B cell (primary cell): ENCODE measurements at regions of chr9 and their contacts with region 1.

Region 1: DNA sequence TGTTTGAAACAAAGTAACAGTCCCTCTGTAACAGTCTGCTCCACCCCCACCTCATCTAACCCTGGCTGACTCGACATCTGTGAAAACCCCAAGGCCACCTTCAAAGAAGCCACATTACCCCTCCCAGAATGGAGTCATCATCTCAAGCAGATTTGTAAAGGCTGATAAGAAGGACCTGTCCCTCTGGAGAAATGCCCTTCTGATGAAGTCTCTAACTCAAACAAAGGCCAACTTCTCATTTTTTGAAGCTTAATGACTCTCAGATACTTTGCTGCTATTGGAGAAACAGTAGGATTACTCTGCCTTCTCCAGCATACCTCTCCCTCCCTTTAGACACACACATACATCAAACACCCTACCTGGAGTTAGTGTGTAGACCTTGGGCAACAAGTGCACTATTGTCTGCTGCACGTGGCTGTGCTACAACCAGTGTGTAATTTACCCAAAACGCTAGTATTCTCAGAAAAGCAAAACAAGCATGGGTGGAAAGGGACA is 5.3 kb upstream of the SUSD1 start:
- DNase-seq: peak; percentile 16
- ATAC-seq: no peak
- H3K4me3 ChIP-seq: no peak overlapping the region
- H3K4me3 Mint-ChIP-seq: no peak overlapping the region
- H3K27ac ChIP-seq: no peak overlapping the region
- H3K27ac Mint-ChIP-seq: peak overlapping the region; percentile 32
- H3K4me1 ChIP-seq: peaks cover 14 to 19% of the 10 kb centered on the region in 2 donors
- H3K4me1 Mint-ChIP-seq: peaks cover 25% of the 10 kb centered on the region
- H3K27me3 ChIP-seq: no peaks in the 10 kb centered on the region
- H3K27me3 Mint-ChIP-seq: no peaks in the 10 kb centered on the region
- CTCF ChIP-seq: no peak

Region 2: GRCh38 chr9:110690962-110691549 is 1489.4 kb before region 1 on chr9:
- CTCF ChIA-PET with region 1: no interaction called
- POLR2A ChIA-PET with region 1: no interaction called
- intact Hi-C with region 1: no loop called
- DNase-seq: no peak
- ATAC-seq: no peak
- H3K4me3 ChIP-seq: no peak overlapping the region
- H3K4me3 Mint-ChIP-seq: no peak overlapping the region
- H3K27ac ChIP-seq: no peak overlapping the region
- H3K27ac Mint-ChIP-seq: no peak overlapping the region
- H3K4me1 ChIP-seq: no peaks in the 10 kb centered on the region
- H3K4me1 Mint-ChIP-seq: no peaks in the 10 kb centered on the region
- H3K27me3 ChIP-seq: no peaks in the 10 kb centered on the region
- H3K27me3 Mint-ChIP-seq: no peaks in the 10 kb centered on the region
- CTCF ChIP-seq: no peak

Region 3: DNA sequence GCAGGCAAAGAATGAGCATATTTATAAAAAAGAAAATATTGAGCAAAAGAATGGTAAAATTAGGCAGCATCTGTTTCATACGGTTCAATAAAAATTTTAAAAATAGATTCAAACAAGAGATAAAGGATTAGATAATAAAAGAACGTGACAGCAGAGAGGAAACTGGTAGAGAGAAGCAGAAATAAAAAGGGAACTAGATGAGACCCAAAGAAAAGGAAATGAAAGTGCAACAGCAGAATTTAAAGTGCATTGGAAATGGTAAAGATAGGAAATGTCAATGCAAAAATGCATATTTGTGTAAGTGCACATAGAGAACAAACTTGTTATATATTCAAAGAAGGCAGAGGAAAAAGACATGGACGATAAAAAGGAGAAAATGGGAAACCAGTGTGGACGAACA is 75.5 kb before region 1 on chr9:
- CTCF ChIA-PET with region 1: interaction called, 4 read pairs
- POLR2A ChIA-PET with region 1: interaction called, 3 read pairs
- intact Hi-C with region 1: loop called (anchors 5 kb)
- DNase-seq: peak; percentile 69
- ATAC-seq: peak; percentile 78
- H3K4me3 ChIP-seq: peak overlapping the region in 2 of 5 experiments; percentile 15 to 54
- H3K4me3 Mint-ChIP-seq: peak overlapping the region; percentile 65
- H3K27ac ChIP-seq: peak overlapping the region; percentile 76 to 83
- H3K27ac Mint-ChIP-seq: peak overlapping the region; percentile 22
- H3K4me1 ChIP-seq: peaks cover 40 to 49% of the 10 kb centered on the region in 2 donors
- H3K4me1 Mint-ChIP-seq: peaks cover 59% of the 10 kb centered on the region
- H3K27me3 ChIP-seq: no peaks in the 10 kb centered on the region
- H3K27me3 Mint-ChIP-seq: no peaks in the 10 kb centered on the region
- CTCF ChIP-seq: no peak